Left ventricle myocardium inferior (tissue), 1 donor: ENCODE measurements at regions of chr3 and their contacts with region 1.

Region 1: DNA sequence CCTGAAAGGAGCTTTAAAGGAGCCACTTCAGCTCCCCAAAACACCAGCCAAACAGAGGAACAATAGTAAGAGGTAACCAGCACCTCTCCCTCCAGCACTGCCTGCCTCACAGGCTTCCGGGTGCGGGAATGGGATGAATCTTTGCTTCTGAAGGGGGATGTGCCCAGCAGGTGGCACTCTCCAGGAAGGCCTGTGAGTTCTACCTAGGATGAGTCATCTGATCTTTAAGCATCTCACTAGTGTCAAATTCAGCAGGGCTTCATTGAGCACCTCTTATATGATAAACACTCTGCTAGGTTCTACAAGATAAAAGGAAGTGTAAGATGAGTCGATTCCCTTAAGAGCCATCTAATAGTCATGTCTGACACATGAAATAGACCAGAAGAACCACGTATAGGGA is 237.4 kb upstream of the UMPS start:
- DNase-seq: peak; percentile 27
- H3K4me3 ChIP-seq: no peak overlapping the region
- H3K27ac ChIP-seq: no peak overlapping the region
- H3K4me1 ChIP-seq: no peaks in the 10 kb centered on the region
- H3K27me3 ChIP-seq: no peaks in the 10 kb centered on the region
- CTCF ChIP-seq: peak; percentile 60

Region 2: GRCh38 chr3:123993818-123994217 is 499.0 kb before region 1 on chr3:
- intact Hi-C with region 1: no loop called
- DNase-seq: no peak
- H3K4me3 ChIP-seq: no peak overlapping the region
- H3K27ac ChIP-seq: no peak overlapping the region
- H3K4me1 ChIP-seq: no peaks in the 10 kb centered on the region
- H3K27me3 ChIP-seq: peaks cover 11% of the 10 kb centered on the region
- CTCF ChIP-seq: no peak

Region 3: GRCh38 chr3:124217542-124217941 is 275.3 kb before region 1 on chr3:
- intact Hi-C with region 1: no loop called
- DNase-seq: peak; percentile 28
- H3K4me3 ChIP-seq: no peak overlapping the region
- H3K27ac ChIP-seq: no peak overlapping the region
- H3K4me1 ChIP-seq: no peaks in the 10 kb centered on the region
- H3K27me3 ChIP-seq: no peaks in the 10 kb centered on the region
- CTCF ChIP-seq: no peak

Region 4: GRCh38 chr3:124540550-124541211 is 47.9 kb after region 1 on chr3:
- intact Hi-C with region 1: loop called (anchors 10 kb)
- DNase-seq: no peak
- H3K4me3 ChIP-seq: peak overlapping the region; percentile 8
- H3K27ac ChIP-seq: peak overlapping the region; percentile 68
- H3K4me1 ChIP-seq: peaks cover 8% of the 10 kb centered on the region
- H3K27me3 ChIP-seq: no peaks in the 10 kb centered on the region
- CTCF ChIP-seq: no peak